Tibial artery (tissue), 4 donors: ENCODE measurements at regions of chr1 and their contacts with region 1.

Region 1: GRCh38 chr1:210239349-210240111 is 6.9 kb downstream of the SERTAD4 start:
- DNase-seq: no peak
- H3K4me3 ChIP-seq: no peak overlapping the region
- H3K27ac ChIP-seq: peak overlapping the region; percentile 50 to 93
- H3K4me1 ChIP-seq: peaks cover 0 to 66% (median 56%) of the 10 kb centered on the region in 4 donors
- H3K27me3 ChIP-seq: no peaks in the 10 kb centered on the region
- CTCF ChIP-seq: peak; percentile 35 to 42

Region 2: GRCh38 chr1:209774592-209774991 is 464.9 kb before region 1 on chr1:
- intact Hi-C with region 1: no loop called
- DNase-seq: no peak
- H3K4me3 ChIP-seq: no peak overlapping the region
- H3K27ac ChIP-seq: no peak overlapping the region
- H3K4me1 ChIP-seq: peaks cover 0 to 12% (median 9%) of the 10 kb centered on the region in 4 donors
- H3K27me3 ChIP-seq: no peaks in the 10 kb centered on the region
- CTCF ChIP-seq: no peak

Region 3: DNA sequence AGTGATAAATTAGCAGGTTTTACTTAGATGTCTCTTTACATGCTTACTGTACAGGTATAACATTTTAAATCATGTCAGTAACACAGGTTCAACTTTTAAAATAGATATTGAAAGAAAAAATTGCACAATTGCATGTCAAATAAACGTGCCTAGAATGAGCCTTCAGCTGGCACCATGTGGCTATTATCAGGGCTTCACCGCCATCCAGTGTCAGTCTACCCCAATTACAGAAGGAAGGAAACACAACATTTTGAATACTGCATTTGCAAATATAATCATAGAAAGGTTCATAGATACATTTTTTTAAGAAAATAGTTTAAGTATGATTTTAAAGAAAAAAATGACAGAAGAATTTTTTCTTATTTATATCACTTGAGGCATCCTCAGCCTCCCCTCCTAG is 54.5 kb before region 1 on chr1:
- intact Hi-C with region 1: no loop called
- DNase-seq: no peak
- H3K4me3 ChIP-seq: no peak overlapping the region
- H3K27ac ChIP-seq: no peak overlapping the region
- H3K4me1 ChIP-seq: no peaks in the 10 kb centered on the region
- H3K27me3 ChIP-seq: no peaks in the 10 kb centered on the region
- CTCF ChIP-seq: no peak

Region 4: DNA sequence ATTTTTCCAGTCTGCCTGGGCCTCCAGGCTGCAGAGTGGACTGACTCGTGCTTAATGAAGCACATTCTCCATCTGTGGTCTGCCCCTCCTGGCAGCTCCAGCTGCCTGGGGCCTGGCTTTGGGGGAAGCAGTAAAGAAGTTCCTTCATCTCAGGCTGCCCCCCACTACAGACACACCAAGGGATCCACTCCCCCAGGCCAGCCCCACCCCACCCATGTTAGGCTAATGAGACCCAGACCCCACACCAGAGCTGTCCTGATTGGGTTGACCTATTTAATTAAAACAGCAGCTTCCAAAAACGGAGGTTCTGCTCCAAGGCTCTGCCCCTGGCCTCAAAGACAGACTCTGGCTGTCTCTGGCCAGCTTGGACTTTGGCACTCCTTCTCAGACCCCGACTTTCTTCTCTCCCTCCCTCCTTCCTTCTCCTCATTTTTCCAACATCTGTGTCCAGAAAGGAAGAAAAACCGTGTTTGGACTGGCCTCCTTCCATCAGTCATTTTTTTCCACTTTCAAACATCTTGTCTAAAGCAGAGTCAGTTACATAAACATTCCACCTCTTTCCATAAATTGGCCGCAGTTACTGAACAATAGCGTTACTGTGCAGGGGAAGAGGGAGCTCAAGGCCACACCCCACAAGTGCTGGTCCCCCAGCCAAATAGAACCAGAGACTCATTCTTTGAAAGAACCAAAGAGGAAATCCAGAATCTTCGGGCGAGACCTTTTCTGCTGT is 22.8 kb after region 1 on chr1:
- intact Hi-C with region 1: loop called (anchors 1 kb)
- DNase-seq: peak in 1 of 2 donors; percentile 70
- H3K4me3 ChIP-seq: no peak overlapping the region
- H3K27ac ChIP-seq: peak overlapping the region; percentile 71 to 76
- H3K4me1 ChIP-seq: peaks cover 0 to 76% (median 49%) of the 10 kb centered on the region in 4 donors
- H3K27me3 ChIP-seq: no peaks in the 10 kb centered on the region
- CTCF ChIP-seq: no peak

Region 5: DNA sequence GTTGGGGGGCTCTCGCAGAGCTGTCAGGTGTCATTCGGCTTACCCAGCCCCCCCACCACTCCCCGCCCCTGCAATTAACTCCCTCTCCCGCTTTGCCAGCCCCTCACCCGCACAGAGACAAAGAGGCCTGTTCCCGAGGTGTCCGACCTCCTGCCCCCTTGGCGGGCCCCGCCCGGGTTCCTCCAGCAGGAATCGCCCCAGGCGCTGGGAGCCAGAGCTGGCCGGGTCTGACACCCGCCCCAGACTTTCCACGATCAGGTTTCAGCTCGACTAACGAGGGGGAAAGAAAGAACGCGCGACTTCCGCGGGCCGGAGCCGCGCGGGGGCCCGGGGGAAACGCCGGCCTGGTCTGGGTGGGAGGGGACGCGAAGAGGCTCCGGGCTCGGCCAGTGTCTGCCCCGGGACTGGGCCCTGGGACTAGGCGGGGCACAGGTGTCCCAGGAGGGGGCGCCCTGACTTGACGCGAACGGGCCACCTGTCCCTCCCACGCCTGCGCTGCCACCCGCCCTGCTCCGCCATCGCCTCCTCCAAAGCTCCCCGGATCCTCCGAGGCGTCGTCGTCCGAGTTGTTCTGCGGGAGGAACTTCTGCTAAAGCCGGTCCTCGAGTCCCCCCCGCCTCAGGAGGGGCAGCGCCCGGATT is 52.8 kb after region 1 on chr1:
- intact Hi-C with region 1: loop called (anchors 2 kb)
- DNase-seq: peak; percentile 42 to 79
- H3K4me3 ChIP-seq: peak overlapping the region; percentile 49 to 65
- H3K27ac ChIP-seq: peak overlapping the region; percentile 90 to 93
- H3K4me1 ChIP-seq: peaks cover 0 to 46% (median 44%) of the 10 kb centered on the region in 4 donors
- H3K27me3 ChIP-seq: no peaks in the 10 kb centered on the region
- CTCF ChIP-seq: peak in 1 of 2 experiments; percentile 18